MCF 10A (cell line): ENCODE measurements at regions of chr11 and their contacts with region 1.

Region 1: GRCh38 chr11:15118431-15118830 is 3.7 kb downstream of the INSC start:
- DNase-seq: no peak
- H3K4me3 Mint-ChIP-seq: no peak overlapping the region
- H3K27ac Mint-ChIP-seq: no peak overlapping the region
- H3K4me1 Mint-ChIP-seq: peaks cover 32% of the 10 kb centered on the region
- H3K27me3 Mint-ChIP-seq: no peaks in the 10 kb centered on the region
- CTCF ChIP-seq: no peak

Region 2: GRCh38 chr11:15038963-15039362 is 79.5 kb before region 1 on chr11:
- CTCF ChIA-PET with region 1: no interaction called
- POLR2A ChIA-PET with region 1: no interaction called
- intact Hi-C with region 1: no loop called
- DNase-seq: peak; percentile 67
- H3K4me3 Mint-ChIP-seq: no peak overlapping the region
- H3K27ac Mint-ChIP-seq: no peak overlapping the region
- H3K4me1 Mint-ChIP-seq: no peaks in the 10 kb centered on the region
- H3K27me3 Mint-ChIP-seq: no peaks in the 10 kb centered on the region
- CTCF ChIP-seq: peak; percentile 64

Region 3: GRCh38 chr11:15107730-15108515 is 10.5 kb before region 1 on chr11:
- CTCF ChIA-PET with region 1: interaction called, 59 read pairs
- POLR2A ChIA-PET with region 1: interaction called, 5 read pairs
- intact Hi-C with region 1: no loop called
- DNase-seq: peak; percentile 62
- H3K4me3 Mint-ChIP-seq: no peak overlapping the region
- H3K27ac Mint-ChIP-seq: peak overlapping the region; percentile 74
- H3K4me1 Mint-ChIP-seq: peaks cover 31% of the 10 kb centered on the region
- H3K27me3 Mint-ChIP-seq: no peaks in the 10 kb centered on the region
- CTCF ChIP-seq: no peak